CD8-positive, alpha-beta T cell (primary cell): ENCODE measurements at regions of chr3 and their contacts with region 1.

Region 1: GRCh38 chr3:40452876-40453730 is 4.0 kb upstream of the RPL14 start:
- DNase-seq: peak; percentile 89 to 99 (median 94)
- ATAC-seq: peak; percentile 89
- H3K4me3 ChIP-seq: peak overlapping the region; percentile 57 to 75
- H3K4me3 Mint-ChIP-seq: peak overlapping the region; percentile 92
- H3K27ac ChIP-seq: peak overlapping the region; percentile 85 to 95
- H3K27ac Mint-ChIP-seq: peak overlapping the region; percentile 99
- H3K4me1 ChIP-seq: peaks cover 22% of the 10 kb centered on the region
- H3K4me1 Mint-ChIP-seq: peaks cover 32% of the 10 kb centered on the region
- H3K27me3 ChIP-seq: no peaks in the 10 kb centered on the region
- H3K27me3 Mint-ChIP-seq: no peaks in the 10 kb centered on the region
- CTCF ChIP-seq: no peak

Region 2: DNA sequence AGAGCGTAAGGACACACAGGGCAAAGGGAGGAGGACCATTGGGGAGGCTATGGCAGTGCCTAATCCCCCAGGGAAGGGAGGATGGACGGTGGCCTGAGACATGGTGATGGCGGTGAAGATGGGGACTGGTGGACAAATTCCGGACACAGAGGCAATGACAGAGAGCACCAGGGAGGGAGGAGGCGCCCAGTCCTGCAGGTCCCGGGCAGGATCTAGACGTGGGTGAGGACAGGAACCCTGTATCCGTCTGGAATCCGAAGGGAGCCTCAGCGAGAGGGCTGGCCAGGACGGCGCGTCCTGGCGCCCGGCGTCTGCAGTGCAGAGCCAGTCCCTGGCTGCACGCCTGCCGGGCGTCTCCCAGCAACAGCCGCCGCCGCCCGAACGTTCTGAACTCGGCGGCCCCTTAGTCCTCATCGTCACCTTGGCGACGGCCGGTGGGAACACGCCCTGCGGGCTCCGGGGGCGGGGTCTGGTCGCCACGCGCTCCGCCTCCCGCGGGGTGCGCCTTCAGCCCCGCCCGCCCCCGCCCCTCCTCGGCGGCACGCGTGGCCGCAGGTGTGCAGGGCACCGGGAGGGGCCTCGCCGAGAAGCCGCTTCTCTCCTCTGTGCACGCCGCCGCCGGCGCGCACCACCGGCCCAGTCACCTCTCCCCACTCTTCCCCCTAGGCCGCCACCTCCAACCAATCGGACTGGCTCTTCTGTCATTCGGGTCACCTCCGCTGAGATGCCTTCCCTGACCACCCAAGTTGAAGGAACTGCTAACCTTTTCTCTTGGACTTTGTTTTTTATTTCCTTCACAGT is 1272.4 kb before region 1 on chr3:
- CTCF ChIA-PET with region 1: no interaction called
- POLR2A ChIA-PET with region 1: no interaction called
- intact Hi-C with region 1: loop called in 1 of 2 experiments (anchors 10 kb)
- DNase-seq: peak; percentile 79 to 96 (median 88)
- ATAC-seq: peak; percentile 89
- H3K4me3 ChIP-seq: peak overlapping the region; percentile 39 to 44
- H3K4me3 Mint-ChIP-seq: peak overlapping the region; percentile 76
- H3K27ac ChIP-seq: peak overlapping the region; percentile 39 to 62
- H3K27ac Mint-ChIP-seq: peak overlapping the region; percentile 85
- H3K4me1 ChIP-seq: peaks cover 27% of the 10 kb centered on the region
- H3K4me1 Mint-ChIP-seq: peaks cover 37% of the 10 kb centered on the region
- H3K27me3 ChIP-seq: no peaks in the 10 kb centered on the region
- H3K27me3 Mint-ChIP-seq: no peaks in the 10 kb centered on the region
- CTCF ChIP-seq: no peak

Region 3: DNA sequence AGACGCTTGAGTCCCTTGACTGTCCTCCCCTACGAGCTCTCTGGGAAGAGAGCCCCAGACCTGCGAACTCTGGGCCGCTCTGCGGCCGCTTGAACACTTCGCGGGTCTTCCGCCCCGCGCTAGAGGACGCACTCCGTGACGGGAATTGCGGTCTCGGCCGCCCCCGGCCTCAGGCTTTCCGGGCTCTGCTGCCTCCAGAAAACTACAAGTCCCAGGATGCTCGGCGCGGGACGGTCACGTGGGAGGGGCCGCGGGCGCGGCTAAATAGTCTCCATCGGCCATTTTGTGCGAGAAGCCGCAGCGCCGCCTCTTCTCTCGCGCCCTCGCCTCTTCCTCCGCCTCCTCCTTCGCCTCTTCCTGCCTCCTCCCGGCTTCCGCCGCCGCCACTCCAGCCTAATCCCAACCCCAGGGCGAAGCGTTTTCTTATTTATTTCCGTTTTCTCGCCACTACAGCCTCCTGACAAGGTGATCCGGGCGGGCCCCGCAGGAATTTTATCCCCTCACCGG is 143.6 kb before region 1 on chr3 and contains the start of gene EIF1B:
- CTCF ChIA-PET with region 1: no interaction called
- POLR2A ChIA-PET with region 1: interaction called, 3 read pairs
- intact Hi-C with region 1: loop called (anchors 1 to 2 kb)
- DNase-seq: peak; percentile 97 to 99 (median 98)
- ATAC-seq: peak; percentile 85
- H3K4me3 ChIP-seq: peak within 1 kb of the TSS; percentile 95 to 96
- H3K4me3 Mint-ChIP-seq: peak within 1 kb of the TSS; percentile 98
- H3K27ac ChIP-seq: peak within 1 kb of the TSS; percentile 93 to 96
- H3K27ac Mint-ChIP-seq: peak within 1 kb of the TSS; percentile 99
- H3K4me1 ChIP-seq: peaks cover 18% of the 10 kb centered on the region
- H3K4me1 Mint-ChIP-seq: peaks cover 33% of the 10 kb centered on the region
- H3K27me3 ChIP-seq: no peaks in the 10 kb centered on the region
- H3K27me3 Mint-ChIP-seq: no peaks in the 10 kb centered on the region
- CTCF ChIP-seq: peak; percentile 67
- total RNA-seq, gene EIF1B: 133 to 135 TPM

Region 4: DNA sequence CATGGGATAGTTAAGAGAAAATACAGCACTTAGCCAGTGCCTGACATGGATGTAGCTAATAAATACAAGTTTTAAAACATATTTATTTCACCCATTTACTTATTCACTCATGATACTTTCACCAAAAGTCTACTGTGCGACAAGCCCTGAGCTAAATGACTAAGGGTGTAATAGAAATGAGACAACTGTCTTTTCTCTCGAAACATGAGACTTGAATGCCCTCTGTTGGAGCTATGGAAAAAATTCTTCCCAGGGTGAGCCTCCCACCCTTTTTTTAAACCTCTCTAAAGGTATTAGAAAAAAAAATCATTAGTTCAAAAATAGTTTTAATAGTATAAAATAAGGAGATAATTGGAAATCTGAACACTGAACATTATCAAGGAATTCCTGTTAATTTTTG is 20.3 kb before region 1 on chr3:
- CTCF ChIA-PET with region 1: no interaction called
- POLR2A ChIA-PET with region 1: no interaction called
- intact Hi-C with region 1: no loop called
- DNase-seq: no peak
- ATAC-seq: no peak
- H3K4me3 ChIP-seq: no peak overlapping the region
- H3K4me3 Mint-ChIP-seq: no peak overlapping the region
- H3K27ac ChIP-seq: no peak overlapping the region
- H3K27ac Mint-ChIP-seq: no peak overlapping the region
- H3K4me1 ChIP-seq: no peaks in the 10 kb centered on the region
- H3K4me1 Mint-ChIP-seq: no peaks in the 10 kb centered on the region
- H3K27me3 ChIP-seq: no peaks in the 10 kb centered on the region
- H3K27me3 Mint-ChIP-seq: no peaks in the 10 kb centered on the region
- CTCF ChIP-seq: no peak

Region 5: DNA sequence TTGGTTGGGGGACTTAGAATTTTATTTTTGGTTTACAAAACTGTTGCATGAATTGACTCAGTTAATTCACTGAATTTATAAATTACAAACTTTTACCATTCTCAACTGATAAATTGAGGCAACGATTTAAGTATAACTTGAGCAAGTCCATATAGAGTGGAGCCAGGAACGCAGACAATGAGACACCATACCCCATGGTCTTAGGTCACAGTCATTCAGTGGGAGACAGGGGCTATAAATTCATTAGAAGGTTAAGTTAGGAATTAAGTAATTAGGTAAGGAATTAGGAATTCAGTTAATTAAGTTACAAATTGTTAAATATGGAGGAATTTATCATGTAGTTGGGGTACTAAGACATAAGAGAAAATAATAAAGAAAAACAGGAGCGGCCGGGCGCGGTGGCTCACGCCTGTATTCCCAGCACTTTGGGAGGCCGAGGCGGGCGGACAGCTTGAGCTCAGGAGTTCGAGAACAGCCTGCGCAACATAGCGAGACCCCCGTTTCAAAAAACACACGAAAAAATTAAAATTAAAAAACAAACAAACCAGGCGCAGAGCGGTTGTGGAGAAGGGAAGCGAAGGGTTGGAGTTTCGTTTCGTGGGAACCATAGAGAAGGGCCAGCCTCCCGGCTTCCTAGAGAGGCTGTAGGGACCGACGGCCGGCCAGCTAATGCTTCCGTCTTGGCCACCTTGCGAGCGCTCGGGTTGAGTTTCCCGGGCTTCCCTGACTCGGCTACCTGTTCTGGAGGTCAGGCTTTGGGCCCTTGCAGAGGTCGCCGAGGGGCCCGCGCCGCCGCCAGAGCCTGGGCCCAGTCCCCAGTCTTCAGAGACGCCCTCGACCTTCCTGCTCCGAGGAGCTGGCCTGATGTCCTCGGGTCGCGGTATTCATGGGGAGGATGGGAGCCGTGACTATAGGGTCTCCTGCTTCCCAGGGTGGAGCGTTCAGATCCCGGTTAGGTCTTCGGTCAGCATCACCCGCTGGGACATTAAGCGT is 23.7 kb after region 1 on chr3 and contains the start of gene ZNF619:
- CTCF ChIA-PET with region 1: interaction called, 3 read pairs
- POLR2A ChIA-PET with region 1: interaction called, 10 read pairs
- intact Hi-C with region 1: loop called (anchors 1 to 2 kb)
- DNase-seq: peak; percentile 27 to 82 (median 57)
- ATAC-seq: peak; percentile 91
- H3K4me3 ChIP-seq: peak within 1 kb of the TSS; percentile 78 to 90
- H3K4me3 Mint-ChIP-seq: peak within 1 kb of the TSS; percentile 86
- H3K27ac ChIP-seq: peak within 1 kb of the TSS; percentile 65 to 79
- H3K27ac Mint-ChIP-seq: peak within 1 kb of the TSS; percentile 84
- H3K4me1 ChIP-seq: peaks cover 10% of the 10 kb centered on the region
- H3K4me1 Mint-ChIP-seq: peaks cover 25% of the 10 kb centered on the region
- H3K27me3 ChIP-seq: no peaks in the 10 kb centered on the region
- H3K27me3 Mint-ChIP-seq: no peaks in the 10 kb centered on the region
- CTCF ChIP-seq: no peak
- total RNA-seq, gene ZNF619: 2.2 to 4.1 TPM

Region 6: DNA sequence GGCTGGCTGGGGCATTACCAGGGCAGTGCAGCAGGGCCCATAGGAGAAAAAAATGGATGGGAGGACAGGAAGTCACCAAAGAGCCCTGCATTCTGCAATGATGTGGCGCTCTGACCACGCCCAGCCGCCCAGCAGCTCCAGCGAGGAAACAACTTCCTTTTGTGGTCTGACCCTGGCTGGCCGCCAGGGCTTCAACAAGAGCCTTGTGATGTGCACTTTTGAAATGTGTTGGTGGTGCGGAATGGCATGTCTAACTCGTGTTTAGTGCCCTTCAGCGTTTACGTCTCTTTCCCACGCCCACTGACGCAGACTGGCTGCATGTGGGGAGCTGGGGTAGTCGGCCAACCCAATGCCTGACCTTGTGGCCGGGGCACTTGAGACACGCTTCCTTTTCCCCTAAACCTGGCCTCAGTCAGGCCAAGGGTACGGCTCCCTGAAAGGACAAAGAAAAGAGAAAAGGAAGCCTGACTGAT is 664.3 kb after region 1 on chr3:
- CTCF ChIA-PET with region 1: no interaction called
- POLR2A ChIA-PET with region 1: no interaction called
- intact Hi-C with region 1: loop called in 1 of 2 experiments (anchors 5 kb)
- DNase-seq: peak; percentile 65 to 94 (median 83)
- ATAC-seq: peak; percentile 84
- H3K4me3 ChIP-seq: peak overlapping the region; percentile 18 to 27
- H3K4me3 Mint-ChIP-seq: peak overlapping the region; percentile 54
- H3K27ac ChIP-seq: peak overlapping the region; percentile 45 to 80
- H3K27ac Mint-ChIP-seq: peak overlapping the region; percentile 96
- H3K4me1 ChIP-seq: peaks cover 25% of the 10 kb centered on the region
- H3K4me1 Mint-ChIP-seq: peaks cover 33% of the 10 kb centered on the region
- H3K27me3 ChIP-seq: no peaks in the 10 kb centered on the region
- H3K27me3 Mint-ChIP-seq: no peaks in the 10 kb centered on the region
- CTCF ChIP-seq: no peak

Region 7: GRCh38 chr3:42012935-42013690 is 1560.0 kb after region 1 on chr3:
- CTCF ChIA-PET with region 1: no interaction called
- POLR2A ChIA-PET with region 1: no interaction called
- intact Hi-C with region 1: loop called (anchors 5 kb)
- DNase-seq: peak; percentile 56 to 89 (median 71)
- ATAC-seq: peak; percentile 73
- H3K4me3 ChIP-seq: peak overlapping the region; percentile 85 to 89
- H3K4me3 Mint-ChIP-seq: peak overlapping the region; percentile 91
- H3K27ac ChIP-seq: peak overlapping the region; percentile 72 to 98
- H3K27ac Mint-ChIP-seq: peak overlapping the region; percentile 98
- H3K4me1 ChIP-seq: peaks cover 20% of the 10 kb centered on the region
- H3K4me1 Mint-ChIP-seq: peaks cover 35% of the 10 kb centered on the region
- H3K27me3 ChIP-seq: no peaks in the 10 kb centered on the region
- H3K27me3 Mint-ChIP-seq: no peaks in the 10 kb centered on the region
- CTCF ChIP-seq: no peak